Left colon (tissue), 2 donors: ENCODE measurements at regions of chr5 and their contacts with region 1.

Region 1: GRCh38 chr5:66494421-66494820 is 101.8 kb upstream of the MAST4 start:
- DNase-seq: no peak
- ATAC-seq: no peak

Region 2: DNA sequence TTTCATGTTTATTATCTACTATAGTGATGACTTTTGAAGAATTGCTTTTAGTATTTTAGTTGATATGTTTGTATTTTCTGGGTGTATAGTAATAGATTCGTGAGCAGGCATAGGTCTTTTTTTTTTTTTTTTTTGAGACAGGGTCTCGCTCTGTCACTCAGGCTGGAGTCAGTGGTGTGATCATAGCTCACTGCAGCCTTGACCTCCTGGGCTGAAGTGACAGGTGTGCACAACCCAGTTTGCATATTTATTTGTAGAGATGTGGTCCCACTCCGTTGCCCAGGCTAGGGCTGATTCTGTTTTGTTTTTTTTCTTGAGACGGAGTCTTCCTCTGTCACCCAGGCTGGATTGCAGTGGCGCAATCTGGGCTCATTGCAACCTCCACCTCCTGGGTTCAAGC is 556.2 kb before region 1 on chr5:
- intact Hi-C with region 1: no loop called
- DNase-seq: no peak
- ATAC-seq: no peak

Region 3: GRCh38 chr5:66538126-66538955 is 43.9 kb after region 1 on chr5:
- intact Hi-C with region 1: loop called in 1 of 2 experiments (anchors 2 kb)
- DNase-seq: no peak
- ATAC-seq: no peak